Heart left ventricle (tissue), 16 donors: ENCODE measurements at regions of chr10 and their contacts with region 1.

Region 1: GRCh38 chr10:712089-712488 is 22.6 kb upstream of the DIP2C start:
- DNase-seq: no peak
- ATAC-seq: no peak
- H3K4me3 ChIP-seq: no peak overlapping the region
- H3K27ac ChIP-seq: no peak overlapping the region
- H3K4me1 ChIP-seq: peaks cover 0 to 3% (median 0%) of the 10 kb centered on the region in 12 donors
- H3K27me3 ChIP-seq: no peaks in the 10 kb centered on the region
- CTCF ChIP-seq: no peak
- POLR2A ChIP-seq: no peak

Region 2: GRCh38 chr10:767211-767610 is 55.1 kb after region 1 on chr10:
- intact Hi-C with region 1: loop called in 1 of 10 experiments (anchors 5 kb)
- DNase-seq: no peak
- ATAC-seq: no peak
- H3K4me3 ChIP-seq: no peak overlapping the region
- H3K27ac ChIP-seq: no peak overlapping the region
- H3K4me1 ChIP-seq: no peaks in the 10 kb centered on the region
- H3K27me3 ChIP-seq: no peaks in the 10 kb centered on the region
- CTCF ChIP-seq: no peak
- POLR2A ChIP-seq: no peak